ENCODE measurements at regions of chr13 and their contacts with region 1.

Region 1: DNA sequence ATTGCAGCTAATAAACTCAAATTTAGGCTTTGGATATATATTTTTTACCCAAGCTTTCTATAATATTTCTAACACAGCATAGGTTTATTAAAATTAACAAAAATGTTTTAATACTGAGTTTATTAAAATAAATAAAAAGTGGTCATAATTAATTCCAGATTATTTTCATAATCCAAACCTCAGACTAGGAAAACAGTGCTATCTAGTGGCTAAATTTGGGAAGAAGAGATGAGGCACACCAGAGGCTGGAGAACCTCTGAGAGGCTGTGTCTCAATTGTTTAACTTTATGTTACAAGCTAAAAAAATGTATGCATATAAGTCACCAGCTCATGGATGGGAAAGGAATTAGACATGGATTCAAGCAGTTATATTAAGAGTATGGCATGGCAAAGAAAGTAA is 392.5 kb downstream of the DIAPH3 start:
- DNase-seq: peak; percentile 59
- ATAC-seq: 0 out of 2 replicates have a peak, but pooled peaks have one; percentile 30
- H3K4me3 ChIP-seq: no peak overlapping the region
- H3K27ac ChIP-seq: no peak overlapping the region
- H3K4me1 ChIP-seq: peaks cover 7% of the 10 kb centered on the region
- H3K27me3 ChIP-seq: no peaks in the 10 kb centered on the region
- CTCF ChIP-seq: peak; percentile 77
- POLR2A ChIP-seq: no peak
- RAD21 ChIP-seq: peak; percentile 76

Region 2: DNA sequence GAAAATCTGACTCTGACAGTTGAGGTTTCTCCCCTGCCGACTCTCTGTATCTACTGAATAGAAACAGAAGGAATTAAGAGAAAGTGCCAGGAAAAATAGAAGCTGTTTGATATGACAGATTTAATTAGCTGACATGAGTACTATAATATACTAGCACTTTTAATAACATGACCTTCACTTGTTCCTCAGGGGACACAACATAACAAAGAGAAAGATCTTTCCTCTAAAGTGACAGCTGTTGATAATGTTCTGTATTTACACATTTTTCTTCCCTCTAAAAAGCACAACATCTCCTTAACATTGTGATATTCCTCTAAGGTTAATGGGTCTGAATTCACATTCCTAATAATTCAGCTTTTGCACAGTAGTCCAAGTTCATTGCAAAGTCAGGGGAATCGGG is 1003.7 kb before region 1 on chr13:
- CTCF ChIA-PET with region 1: no interaction called
- POLR2A ChIA-PET with region 1: no interaction called
- dilution Hi-C with region 1: no loop called
- in situ Hi-C with region 1: no loop called
- intact Hi-C with region 1: no loop called
- DNase-seq: no peak
- ATAC-seq: no peak
- H3K4me3 ChIP-seq: no peak overlapping the region
- H3K27ac ChIP-seq: no peak overlapping the region
- H3K4me1 ChIP-seq: no peaks in the 10 kb centered on the region
- H3K27me3 ChIP-seq: no peaks in the 10 kb centered on the region
- CTCF ChIP-seq: no peak
- POLR2A ChIP-seq: no peak
- RAD21 ChIP-seq: no peak

Region 3: GRCh38 chr13:59391696-59392095 is 379.6 kb before region 1 on chr13:
- CTCF ChIA-PET with region 1: interaction called, 8 read pairs
- POLR2A ChIA-PET with region 1: no interaction called
- dilution Hi-C with region 1: no loop called
- in situ Hi-C with region 1: loop called (anchors 10 kb)
- intact Hi-C with region 1: loop called (anchors 1 kb)
- DNase-seq: peak; percentile 74
- ATAC-seq: peak; percentile 96
- H3K4me3 ChIP-seq: no peak overlapping the region
- H3K27ac ChIP-seq: no peak overlapping the region
- H3K4me1 ChIP-seq: no peaks in the 10 kb centered on the region
- H3K27me3 ChIP-seq: no peaks in the 10 kb centered on the region
- CTCF ChIP-seq: peak; percentile 87
- POLR2A ChIP-seq: no peak
- RAD21 ChIP-seq: peak; percentile 84

Region 4: GRCh38 chr13:60163478-60164233 is 392.4 kb after region 1 on chr13 and contains the start of gene DIAPH3:
- CTCF ChIA-PET with region 1: no interaction called
- POLR2A ChIA-PET with region 1: no interaction called
- dilution Hi-C with region 1: no loop called
- in situ Hi-C with region 1: no loop called
- intact Hi-C with region 1: loop called (anchors 5 kb)
- DNase-seq: peak; percentile 95
- ATAC-seq: peak; percentile 99
- H3K4me3 ChIP-seq: peak within 1 kb of the TSS; percentile 64
- H3K27ac ChIP-seq: peak within 1 kb of the TSS; percentile 95
- H3K4me1 ChIP-seq: peaks cover 4% of the 10 kb centered on the region; the same call in 1 of the 2 replicates
- H3K27me3 ChIP-seq: no peaks in the 10 kb centered on the region
- CTCF ChIP-seq: no peak
- POLR2A ChIP-seq: peak; percentile 80
- RAD21 ChIP-seq: no peak
- total RNA-seq, gene DIAPH3: 9.3 and 16.1 TPM in 2 replicates

Region 5: GRCh38 chr13:60329221-60329983 is 558.1 kb after region 1 on chr13:
- CTCF ChIA-PET with region 1: interaction called, 5 read pairs
- POLR2A ChIA-PET with region 1: no interaction called
- dilution Hi-C with region 1: no loop called
- in situ Hi-C with region 1: no loop called
- intact Hi-C with region 1: loop called (anchors 2 kb)
- DNase-seq: peak; percentile 16
- ATAC-seq: peak; percentile 90
- H3K4me3 ChIP-seq: no peak overlapping the region
- H3K27ac ChIP-seq: peak overlapping the region; percentile 1; the same call in 1 of the 2 replicates
- H3K4me1 ChIP-seq: peaks cover 2% of the 10 kb centered on the region; the same call in 1 of the 2 replicates
- H3K27me3 ChIP-seq: no peaks in the 10 kb centered on the region; the same call in 1 of the 2 replicates
- CTCF ChIP-seq: peak; percentile 50
- POLR2A ChIP-seq: no peak
- RAD21 ChIP-seq: peak; percentile 61

Region 6: DNA sequence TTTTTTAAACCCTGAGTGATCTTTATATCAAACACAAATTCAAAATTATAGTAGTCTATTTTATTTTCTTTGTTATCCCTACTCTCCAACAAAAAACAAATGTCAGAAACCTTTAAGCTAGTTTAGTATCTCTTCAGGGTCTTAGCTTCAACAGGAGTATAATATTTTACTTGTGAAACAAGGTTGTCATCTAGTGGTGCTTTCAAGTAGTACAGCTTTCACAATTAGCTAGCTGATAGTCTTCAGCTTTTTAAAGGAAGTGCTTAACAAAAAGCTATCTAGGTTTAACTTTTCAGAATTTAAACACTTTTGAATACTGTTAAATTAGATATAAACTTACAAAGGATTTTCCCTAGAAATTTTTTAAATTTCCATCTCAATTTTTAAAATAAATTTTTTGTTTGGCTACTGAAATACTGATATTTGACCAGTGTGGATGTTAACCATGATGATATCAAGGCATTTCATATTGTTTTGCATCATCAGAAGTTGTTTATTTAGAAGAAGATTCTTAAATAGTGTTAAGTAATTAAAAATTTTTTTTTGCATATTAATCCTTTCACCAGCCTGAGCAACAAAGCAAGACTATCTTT is 659.9 kb after region 1 on chr13:
- CTCF ChIA-PET with region 1: no interaction called
- POLR2A ChIA-PET with region 1: no interaction called
- dilution Hi-C with region 1: no loop called
- in situ Hi-C with region 1: no loop called
- intact Hi-C with region 1: loop called (anchors 2 kb)
- DNase-seq: peak; percentile 72
- ATAC-seq: peak; percentile 95
- H3K4me3 ChIP-seq: no peak overlapping the region
- H3K27ac ChIP-seq: no peak overlapping the region
- H3K4me1 ChIP-seq: no peaks in the 10 kb centered on the region
- H3K27me3 ChIP-seq: no peaks in the 10 kb centered on the region
- CTCF ChIP-seq: peak; percentile 94
- POLR2A ChIP-seq: no peak
- RAD21 ChIP-seq: peak; percentile 83